Tibial artery (tissue), 4 donors: ENCODE measurements at regions of chr1 and their contacts with region 1.

Region 1: GRCh38 chr1:3453203-3453761 is 1.2 kb upstream of the ARHGEF16 start:
- DNase-seq: peak; percentile 61 to 80
- H3K4me3 ChIP-seq: no peak overlapping the region
- H3K27ac ChIP-seq: no peak overlapping the region
- H3K4me1 ChIP-seq: peaks cover 0 to 30% (median 17%) of the 10 kb centered on the region in 4 donors
- H3K27me3 ChIP-seq: peaks cover 0 to 52% of the 10 kb centered on the region in 2 donors
- CTCF ChIP-seq: peak; percentile 93 to 97

Region 2: GRCh38 chr1:3393024-3393986 is 60.0 kb before region 1 on chr1:
- intact Hi-C with region 1: no loop called
- DNase-seq: peak in 1 of 2 donors; percentile 86
- H3K4me3 ChIP-seq: peak overlapping the region; percentile 48 to 53
- H3K27ac ChIP-seq: peak overlapping the region; percentile 87 to 89
- H3K4me1 ChIP-seq: peaks cover 11 to 60% (median 33%) of the 10 kb centered on the region in 4 donors
- H3K27me3 ChIP-seq: no peaks in the 10 kb centered on the region
- CTCF ChIP-seq: no peak

Region 3: DNA sequence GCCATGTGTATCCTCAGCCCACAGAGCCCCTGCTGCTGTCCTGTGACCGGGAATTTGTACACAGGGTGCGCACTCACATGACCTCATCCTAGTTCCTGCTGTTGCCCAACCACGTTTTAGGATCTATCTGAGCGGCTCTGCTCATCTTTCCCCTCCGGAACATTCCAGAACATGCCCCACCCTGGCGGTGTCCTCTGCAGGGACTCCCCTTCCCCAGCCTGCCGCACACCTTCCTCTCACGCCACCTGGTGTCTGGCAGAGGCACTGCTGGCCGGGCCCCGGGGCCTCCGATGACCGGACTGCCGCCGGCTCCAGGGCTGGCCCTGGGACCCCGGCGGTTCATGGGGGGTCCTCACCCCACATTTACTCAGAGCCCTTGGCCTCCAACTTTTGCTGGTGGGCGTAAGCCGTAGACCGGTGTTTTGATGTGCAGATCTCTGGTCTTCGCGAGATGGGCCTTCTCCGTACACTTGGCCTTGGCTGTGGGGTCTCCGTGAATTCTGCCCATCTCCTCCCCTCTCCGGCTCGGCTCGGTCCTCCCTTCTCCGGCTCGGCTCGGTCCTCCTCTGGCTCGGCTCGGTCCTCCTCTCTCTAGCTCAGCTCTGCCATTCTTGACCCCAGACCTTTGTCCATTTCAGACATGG is 30.6 kb after region 1 on chr1:
- intact Hi-C with region 1: loop called (anchors 2 kb)
- DNase-seq: no peak
- H3K4me3 ChIP-seq: no peak overlapping the region
- H3K27ac ChIP-seq: no peak overlapping the region
- H3K4me1 ChIP-seq: no peaks in the 10 kb centered on the region
- H3K27me3 ChIP-seq: peaks cover 0 to 14% of the 10 kb centered on the region in 2 donors
- CTCF ChIP-seq: peak; percentile 44 to 54

Region 4: GRCh38 chr1:3618881-3619671 is 165.8 kb after region 1 on chr1:
- intact Hi-C with region 1: loop called (anchors 5 kb)
- DNase-seq: peak; percentile 82 to 85
- H3K4me3 ChIP-seq: no peak overlapping the region
- H3K27ac ChIP-seq: no peak overlapping the region
- H3K4me1 ChIP-seq: peaks cover 0 to 21% (median 17%) of the 10 kb centered on the region in 4 donors
- H3K27me3 ChIP-seq: peaks cover 0 to 23% of the 10 kb centered on the region in 2 donors
- CTCF ChIP-seq: peak; percentile 83 to 85

Region 5: DNA sequence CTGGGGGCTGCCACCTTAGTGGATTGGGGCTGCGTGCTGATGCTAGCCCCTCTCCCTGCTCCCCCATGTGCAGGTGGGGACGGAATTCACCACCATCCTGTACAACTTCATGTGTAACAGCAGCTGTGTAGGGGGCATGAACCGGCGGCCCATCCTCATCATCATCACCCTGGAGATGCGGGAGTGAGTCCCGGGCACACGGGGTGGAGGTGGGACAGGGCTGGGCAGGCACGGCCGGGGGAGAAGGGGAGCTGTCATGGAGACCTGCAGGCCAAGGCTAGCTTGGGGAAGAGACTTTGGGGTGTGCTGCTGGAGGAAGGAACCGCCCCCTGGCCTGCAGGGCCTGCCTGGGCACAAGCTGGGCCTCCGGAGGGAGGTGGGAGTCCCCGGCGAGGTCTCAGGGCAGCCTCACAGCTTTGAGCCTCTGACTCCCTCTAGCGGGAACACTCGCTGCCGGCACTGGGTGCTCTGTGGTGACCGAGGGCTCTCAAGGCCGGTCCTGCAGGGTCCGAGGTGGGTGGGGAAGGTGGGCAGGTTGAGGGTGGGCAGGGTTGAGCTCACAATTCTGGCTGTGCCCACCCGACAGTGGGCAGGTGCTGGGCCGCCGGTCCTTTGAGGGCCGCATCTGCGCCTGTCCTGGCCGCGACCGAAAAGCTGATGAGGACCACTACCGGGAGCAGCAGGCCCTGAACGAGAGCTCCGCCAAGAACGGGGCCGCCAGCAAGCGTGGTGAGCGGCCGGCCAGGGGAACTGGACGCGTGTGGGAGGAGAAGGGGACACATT is 274.0 kb after region 1 on chr1:
- intact Hi-C with region 1: loop called (anchors 10 kb)
- DNase-seq: no peak
- H3K4me3 ChIP-seq: no peak overlapping the region
- H3K27ac ChIP-seq: no peak overlapping the region
- H3K4me1 ChIP-seq: peaks cover 0 to 5% (median 2%) of the 10 kb centered on the region in 4 donors
- H3K27me3 ChIP-seq: peaks cover 0 to 71% of the 10 kb centered on the region in 2 donors
- CTCF ChIP-seq: no peak